CD8-positive, alpha-beta memory T cell (primary cell): ENCODE measurements at regions of chr19 and their contacts with region 1.

Region 1: GRCh38 chr19:53195265-53195903 is 2.2 kb upstream of the ZNF665 start:
- DNase-seq: peak; percentile 48 to 80 (median 75)
- H3K4me3 ChIP-seq: no peak overlapping the region
- H3K4me3 Mint-ChIP-seq: peak overlapping the region; percentile 35 to 79 (median 66)
- H3K27ac ChIP-seq: no peak overlapping the region
- H3K27ac Mint-ChIP-seq: peak overlapping the region; percentile 2 to 84 (median 28)
- H3K4me1 ChIP-seq: peaks cover 11% of the 10 kb centered on the region
- H3K4me1 Mint-ChIP-seq: peaks cover 42 to 60% (median 43%) of the 10 kb centered on the region in 3 donors
- H3K27me3 ChIP-seq: no peaks in the 10 kb centered on the region
- H3K27me3 Mint-ChIP-seq: peaks cover 0 to 6% of the 10 kb centered on the region in 2 donors

Region 2: GRCh38 chr19:52391135-52391534 is 804.2 kb before region 1 on chr19:
- CTCF ChIA-PET with region 1: no interaction called
- POLR2A ChIA-PET with region 1: interaction called, 10 read pairs
- DNase-seq: no peak
- H3K4me3 ChIP-seq: no peak overlapping the region
- H3K4me3 Mint-ChIP-seq: no peak overlapping the region
- H3K27ac ChIP-seq: no peak overlapping the region
- H3K27ac Mint-ChIP-seq: no peak overlapping the region
- H3K4me1 ChIP-seq: no peaks in the 10 kb centered on the region
- H3K4me1 Mint-ChIP-seq: no peaks in the 10 kb centered on the region
- H3K27me3 ChIP-seq: no peaks in the 10 kb centered on the region
- H3K27me3 Mint-ChIP-seq: peaks cover 0 to 3% of the 10 kb centered on the region in 2 donors

Region 3: DNA sequence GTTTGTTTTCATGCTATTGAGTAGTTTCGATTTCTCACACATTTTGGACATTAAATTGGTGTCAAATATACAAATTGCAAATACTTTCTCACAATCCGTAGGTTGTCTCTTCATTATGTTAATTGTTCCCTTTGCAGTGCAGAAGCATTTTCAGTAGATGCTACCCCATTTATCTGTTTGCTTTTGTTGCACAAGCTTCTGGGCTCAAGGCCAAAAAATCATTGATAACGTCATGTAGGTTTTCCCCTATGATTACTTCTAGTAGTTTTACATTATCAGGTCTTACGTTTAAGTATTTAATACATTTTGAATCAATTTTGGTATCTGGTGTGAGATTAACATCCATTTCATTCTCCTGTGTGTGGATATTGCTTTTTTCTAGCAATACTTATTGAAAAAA is 22.5 kb before region 1 on chr19:
- CTCF ChIA-PET with region 1: no interaction called
- POLR2A ChIA-PET with region 1: no interaction called
- DNase-seq: no peak
- H3K4me3 ChIP-seq: no peak overlapping the region
- H3K4me3 Mint-ChIP-seq: no peak overlapping the region
- H3K27ac ChIP-seq: no peak overlapping the region
- H3K27ac Mint-ChIP-seq: no peak overlapping the region
- H3K4me1 ChIP-seq: no peaks in the 10 kb centered on the region
- H3K4me1 Mint-ChIP-seq: no peaks in the 10 kb centered on the region
- H3K27me3 ChIP-seq: no peaks in the 10 kb centered on the region
- H3K27me3 Mint-ChIP-seq: no peaks in the 10 kb centered on the region

Region 4: GRCh38 chr19:53246498-53246897 is 51.1 kb after region 1 on chr19:
- CTCF ChIA-PET with region 1: no interaction called
- POLR2A ChIA-PET with region 1: no interaction called
- DNase-seq: no peak
- H3K4me3 ChIP-seq: no peak overlapping the region
- H3K4me3 Mint-ChIP-seq: no peak overlapping the region
- H3K27ac ChIP-seq: no peak overlapping the region
- H3K27ac Mint-ChIP-seq: no peak overlapping the region
- H3K4me1 ChIP-seq: no peaks in the 10 kb centered on the region
- H3K4me1 Mint-ChIP-seq: no peaks in the 10 kb centered on the region
- H3K27me3 ChIP-seq: no peaks in the 10 kb centered on the region
- H3K27me3 Mint-ChIP-seq: no peaks in the 10 kb centered on the region